AG04450 (cell line): ENCODE measurements at regions of chrX and their contacts with region 1.

Region 1: GRCh38 chrX:115690511-115691216 is 129.7 kb downstream of the PLS3 start:
- DNase-seq: peak; percentile 51
- H3K4me3 ChIP-seq: no peak overlapping the region
- H3K27ac ChIP-seq: no peak overlapping the region
- H3K27me3 ChIP-seq: no peaks in the 10 kb centered on the region
- CTCF ChIP-seq: peak; percentile 69

Region 2: DNA sequence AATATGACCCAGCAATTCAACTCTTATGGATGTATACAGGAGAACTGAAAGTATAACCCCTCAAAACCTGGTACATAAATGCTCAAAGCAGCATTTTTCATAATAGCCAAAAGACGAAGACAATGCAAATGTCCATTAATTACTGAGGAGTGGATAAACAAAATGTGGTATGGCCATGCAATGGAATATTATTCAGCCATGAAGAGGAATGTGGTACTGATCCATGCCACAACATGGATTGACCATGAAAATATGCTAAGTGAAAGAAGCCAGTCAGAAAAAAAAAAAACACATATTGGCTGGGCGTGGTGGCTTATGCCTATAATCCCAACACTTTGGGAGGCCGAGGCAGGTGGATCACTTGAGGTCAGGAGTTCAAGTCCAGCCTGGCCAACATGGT is 204.2 kb before region 1 on chrX:
- CTCF ChIA-PET with region 1: no interaction called
- POLR2A ChIA-PET with region 1: no interaction called
- DNase-seq: no peak
- H3K4me3 ChIP-seq: no peak overlapping the region
- H3K27ac ChIP-seq: no peak overlapping the region
- H3K27me3 ChIP-seq: no peaks in the 10 kb centered on the region
- CTCF ChIP-seq: no peak

Region 3: DNA sequence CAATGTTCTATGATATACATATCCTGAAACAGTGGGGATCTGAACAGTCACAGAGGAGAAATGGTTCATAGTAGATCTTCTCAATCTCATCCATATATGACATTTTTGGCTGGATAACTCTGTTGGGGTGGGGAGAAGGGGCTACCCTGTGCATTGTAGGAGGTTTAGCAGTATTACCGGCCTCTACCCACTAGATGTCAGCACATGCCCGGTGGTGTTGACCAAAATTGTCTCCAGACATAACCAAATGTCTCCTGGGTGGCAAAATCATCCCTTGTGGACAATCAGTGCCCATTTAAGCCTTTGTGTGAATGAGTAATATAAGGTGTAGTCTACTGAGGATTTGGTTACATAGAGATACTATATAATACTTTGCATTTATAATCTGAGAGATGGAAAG is 39.7 kb before region 1 on chrX:
- CTCF ChIA-PET with region 1: interaction called, 26 read pairs
- POLR2A ChIA-PET with region 1: no interaction called
- DNase-seq: no peak
- H3K4me3 ChIP-seq: no peak overlapping the region
- H3K27ac ChIP-seq: no peak overlapping the region
- H3K27me3 ChIP-seq: no peaks in the 10 kb centered on the region
- CTCF ChIP-seq: peak; percentile 60

Region 4: GRCh38 chrX:115898382-115899001 is 207.8 kb after region 1 on chrX:
- CTCF ChIA-PET with region 1: no interaction called
- POLR2A ChIA-PET with region 1: no interaction called
- DNase-seq: no peak
- H3K4me3 ChIP-seq: no peak overlapping the region
- H3K27ac ChIP-seq: no peak overlapping the region
- H3K27me3 ChIP-seq: no peaks in the 10 kb centered on the region
- CTCF ChIP-seq: no peak